ENCODE measurements at regions of chr22 and their contacts with region 1.

Region 1: GRCh38 chr22:30606455-30607299 is at the start of gene TCN2:
- DNase-seq: peak; percentile 41
- ATAC-seq: peak; percentile 97
- H3K4me3 ChIP-seq: peak within 1 kb of the TSS; percentile 48 to 79 (median 53)
- H3K27ac ChIP-seq: no peak within 1 kb of the TSS
- H3K4me1 ChIP-seq: peaks cover 38% of the 10 kb centered on the region
- H3K27me3 ChIP-seq: peaks cover 0 to 13% of the 10 kb centered on the region in 2 experiments; a peak in 3 of 5 replicates
- CTCF ChIP-seq: peak; percentile 22; the same call in 1 of the 2 replicates
- EP300 ChIP-seq: no peak
- POLR2A ChIP-seq: no peak
- RAD21 ChIP-seq: no peak
- total RNA-seq, gene TCN2: 0.31 TPM in 1 of 2 replicates, not detected in the other

Region 2: GRCh38 chr22:30444632-30445437 is 161.8 kb before region 1 on chr22:
- CTCF ChIA-PET with region 1: no interaction called
- POLR2A ChIA-PET with region 1: no interaction called
- in situ Hi-C with region 1: no loop called
- intact Hi-C with region 1: loop called (anchors 2 kb)
- DNase-seq: peak; percentile 41
- ATAC-seq: peak; percentile 79
- H3K4me3 ChIP-seq: no peak overlapping the region
- H3K27ac ChIP-seq: no peak overlapping the region
- H3K4me1 ChIP-seq: peaks cover 16% of the 10 kb centered on the region
- H3K27me3 ChIP-seq: peaks cover 0 to 7% of the 10 kb centered on the region in 2 experiments; a peak in 2 of 5 replicates
- CTCF ChIP-seq: peak; percentile 78
- EP300 ChIP-seq: no peak
- POLR2A ChIP-seq: no peak; a peak in 1 of 4 replicates
- RAD21 ChIP-seq: peak; percentile 66

Region 3: DNA sequence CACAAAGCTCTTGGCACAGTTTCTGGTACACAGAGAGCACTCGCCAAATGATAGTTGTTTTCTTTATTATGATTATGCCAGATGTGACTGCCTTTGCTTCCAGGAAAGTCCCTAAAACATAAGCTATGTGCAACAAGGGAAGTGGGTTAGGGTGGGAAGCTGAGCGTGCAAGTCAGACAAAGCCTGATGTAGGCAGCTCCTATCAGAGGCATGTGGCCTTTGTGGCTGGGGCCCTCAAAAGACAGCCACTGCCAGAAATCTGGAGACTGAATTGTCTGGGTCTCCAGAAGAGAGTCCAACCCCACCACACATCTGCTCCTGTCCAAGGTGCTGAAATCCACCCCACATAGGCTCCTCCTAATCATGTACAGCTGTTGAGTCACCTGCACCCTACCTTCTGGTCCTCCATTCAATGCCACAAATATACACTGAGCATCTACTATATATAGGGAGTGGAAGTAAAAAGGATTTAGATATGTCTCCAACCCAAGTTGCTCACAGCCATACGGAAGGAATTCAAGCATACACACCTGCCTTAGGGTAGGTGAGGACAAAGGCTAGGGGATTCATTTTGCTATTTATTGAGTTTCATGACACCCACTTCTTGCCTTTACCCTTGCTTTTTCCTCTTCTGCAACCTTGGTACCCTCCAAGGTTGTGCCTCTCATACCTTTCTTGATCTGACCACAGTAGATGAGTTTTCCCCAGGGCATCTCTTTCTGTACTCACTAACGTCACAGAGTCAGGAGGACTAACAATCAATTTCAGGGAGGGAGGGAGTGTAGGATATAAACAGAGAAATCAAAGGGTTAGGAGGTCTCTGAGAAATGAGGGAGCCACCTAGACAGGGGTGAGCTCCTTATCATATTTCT is 147.3 kb before region 1 on chr22:
- CTCF ChIA-PET with region 1: no interaction called
- POLR2A ChIA-PET with region 1: no interaction called
- in situ Hi-C with region 1: no loop called
- intact Hi-C with region 1: no loop called
- DNase-seq: peak; percentile 12
- ATAC-seq: no peak
- H3K4me3 ChIP-seq: no peak overlapping the region
- H3K27ac ChIP-seq: no peak overlapping the region
- H3K4me1 ChIP-seq: no peaks in the 10 kb centered on the region
- H3K27me3 ChIP-seq: peaks cover 0 to 12% of the 10 kb centered on the region in 2 experiments; a peak in 2 of 5 replicates
- CTCF ChIP-seq: no peak
- EP300 ChIP-seq: no peak
- POLR2A ChIP-seq: no peak
- RAD21 ChIP-seq: no peak

Measured in HepG2 (cell line).